ENCODE measurements at regions of chr11 and their contacts with region 1.

Region 1: GRCh38 chr11:102914238-102915043 is 39.7 kb upstream of the MMP12 start:
- DNase-seq: peak in 1 of 10 donors; percentile 9

Region 2: DNA sequence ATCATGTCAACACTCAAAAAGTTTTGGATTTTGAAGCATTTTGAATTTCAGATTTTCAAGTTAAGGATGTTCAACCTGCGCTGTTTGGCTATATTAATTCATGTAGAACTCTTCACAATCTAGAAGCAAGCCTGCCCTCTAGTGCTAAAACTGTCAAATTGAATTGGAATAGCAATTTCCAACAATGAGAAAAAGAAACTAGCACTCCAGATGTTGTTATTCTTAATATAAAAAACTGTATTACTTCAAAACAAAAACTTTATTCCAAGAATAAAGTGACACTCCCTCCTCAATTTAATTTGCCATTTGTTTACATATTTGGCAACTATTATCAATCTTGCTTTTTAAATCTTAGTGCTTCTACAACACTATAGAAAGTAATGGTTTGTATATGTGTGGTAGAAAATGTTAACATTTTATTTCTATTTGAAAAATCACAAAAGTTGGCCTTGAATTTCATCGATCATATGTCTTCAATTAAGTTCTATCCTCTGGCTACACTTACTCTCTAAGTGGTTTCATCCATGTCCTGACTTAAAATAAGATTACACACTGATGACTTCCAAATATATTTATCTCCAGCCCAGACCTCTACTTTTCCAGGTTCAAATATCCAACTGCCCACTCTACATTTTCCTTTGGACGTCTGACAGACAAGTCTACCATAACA is 140.9 kb after region 1 on chr11:
- intact Hi-C with region 1: loop called (anchors 10 kb)
- DNase-seq: no peak

Region 3: GRCh38 chr11:103222806-103223205 is 308.4 kb after region 1 on chr11:
- intact Hi-C with region 1: no loop called
- DNase-seq: no peak